Activated CD8-positive, alpha-beta memory T cell treated with anti-CD3 and anti-CD28 coated beads, Interleukin-2, amount 10 ng/mL, durations not matched to agents 7 days and 5 days (primary cell): ENCODE measurements at regions of chr15 and their contacts with region 1.

Region 1: DNA sequence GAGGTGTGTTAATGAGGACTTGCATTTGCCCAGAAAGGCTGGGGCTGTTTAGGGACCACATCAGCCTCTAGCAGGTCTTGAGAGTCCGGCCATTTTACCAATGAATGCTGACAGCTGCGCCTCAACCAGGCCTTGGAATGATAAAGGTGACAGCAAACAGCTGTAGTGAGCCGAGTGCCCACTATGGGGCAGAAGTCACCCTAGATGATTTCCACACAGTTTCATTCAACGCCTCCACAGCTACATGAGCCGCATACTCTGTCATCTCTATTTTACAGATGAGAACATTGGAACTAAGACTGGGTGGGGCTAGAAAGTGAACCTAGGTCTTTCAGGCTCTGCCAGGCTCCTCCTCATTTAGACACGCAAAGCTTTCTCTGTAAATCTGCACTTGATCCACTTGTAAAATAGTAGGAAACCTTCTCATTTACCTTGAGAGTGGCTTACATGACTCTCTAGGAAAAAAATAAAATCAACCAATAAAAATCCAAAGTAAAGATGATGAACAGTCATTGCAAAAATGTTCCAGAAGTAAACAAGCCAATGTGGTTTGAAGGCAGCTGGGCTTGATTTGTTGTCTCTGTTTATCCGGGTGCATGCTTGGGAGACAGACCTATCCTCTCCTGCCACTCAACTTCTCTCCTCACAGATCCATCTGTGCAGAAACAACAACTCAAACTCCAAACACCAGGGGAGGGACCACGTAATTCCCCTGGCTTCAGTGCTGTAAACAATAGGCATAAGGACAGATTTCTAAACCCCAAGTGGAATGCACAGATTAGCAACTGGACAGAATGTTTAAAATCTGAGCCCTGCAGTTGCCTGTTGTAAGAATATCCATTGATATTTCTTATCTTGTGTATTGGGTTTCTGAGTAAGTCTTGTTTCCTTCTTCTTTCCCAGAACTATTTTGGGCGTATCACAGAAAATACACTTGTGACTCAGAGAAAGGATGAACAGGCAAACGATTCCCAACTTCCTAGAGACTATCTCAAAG is 31.5 kb upstream of the LDHAL6B start:
- DNase-seq: peak; percentile 63
- ATAC-seq: peak; percentile 91
- H3K4me3 Mint-ChIP-seq: no peak overlapping the region
- H3K27ac Mint-ChIP-seq: no peak overlapping the region
- H3K4me1 Mint-ChIP-seq: peaks cover 17% of the 10 kb centered on the region
- H3K27me3 Mint-ChIP-seq: peaks cover 4% of the 10 kb centered on the region

Region 2: DNA sequence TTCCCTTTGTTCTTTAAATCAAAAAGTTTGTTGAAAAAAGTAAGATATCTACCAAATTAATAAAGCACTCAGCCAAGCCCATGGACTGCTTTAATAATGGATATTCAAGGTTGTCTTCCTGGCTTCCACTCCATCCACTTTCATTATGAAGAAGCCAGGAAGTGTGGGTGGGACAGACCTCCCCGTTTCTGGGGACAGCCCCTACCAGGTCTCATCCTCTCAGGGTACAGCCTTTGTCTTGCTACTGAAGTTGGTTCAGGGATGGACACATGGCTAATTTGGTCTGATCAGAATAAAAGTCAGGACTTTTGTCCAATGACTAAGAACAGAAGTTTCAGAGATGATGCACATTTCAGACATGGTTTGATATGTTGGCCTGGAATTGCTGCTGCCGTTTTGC is 37.6 kb before region 1 on chr15:
- CTCF ChIA-PET with region 1: no interaction called
- DNase-seq: no peak
- ATAC-seq: peak; percentile 45
- H3K4me3 Mint-ChIP-seq: no peak overlapping the region
- H3K27ac Mint-ChIP-seq: peak overlapping the region; percentile 50
- H3K4me1 Mint-ChIP-seq: peaks cover 21% of the 10 kb centered on the region
- H3K27me3 Mint-ChIP-seq: no peaks in the 10 kb centered on the region

Region 3: GRCh38 chr15:59191855-59192237 is 16.7 kb after region 1 on chr15:
- CTCF ChIA-PET with region 1: no interaction called
- DNase-seq: no peak
- ATAC-seq: no peak
- H3K4me3 Mint-ChIP-seq: no peak overlapping the region
- H3K27ac Mint-ChIP-seq: no peak overlapping the region
- H3K4me1 Mint-ChIP-seq: peaks cover 10% of the 10 kb centered on the region
- H3K27me3 Mint-ChIP-seq: peaks cover 5% of the 10 kb centered on the region

Region 4: DNA sequence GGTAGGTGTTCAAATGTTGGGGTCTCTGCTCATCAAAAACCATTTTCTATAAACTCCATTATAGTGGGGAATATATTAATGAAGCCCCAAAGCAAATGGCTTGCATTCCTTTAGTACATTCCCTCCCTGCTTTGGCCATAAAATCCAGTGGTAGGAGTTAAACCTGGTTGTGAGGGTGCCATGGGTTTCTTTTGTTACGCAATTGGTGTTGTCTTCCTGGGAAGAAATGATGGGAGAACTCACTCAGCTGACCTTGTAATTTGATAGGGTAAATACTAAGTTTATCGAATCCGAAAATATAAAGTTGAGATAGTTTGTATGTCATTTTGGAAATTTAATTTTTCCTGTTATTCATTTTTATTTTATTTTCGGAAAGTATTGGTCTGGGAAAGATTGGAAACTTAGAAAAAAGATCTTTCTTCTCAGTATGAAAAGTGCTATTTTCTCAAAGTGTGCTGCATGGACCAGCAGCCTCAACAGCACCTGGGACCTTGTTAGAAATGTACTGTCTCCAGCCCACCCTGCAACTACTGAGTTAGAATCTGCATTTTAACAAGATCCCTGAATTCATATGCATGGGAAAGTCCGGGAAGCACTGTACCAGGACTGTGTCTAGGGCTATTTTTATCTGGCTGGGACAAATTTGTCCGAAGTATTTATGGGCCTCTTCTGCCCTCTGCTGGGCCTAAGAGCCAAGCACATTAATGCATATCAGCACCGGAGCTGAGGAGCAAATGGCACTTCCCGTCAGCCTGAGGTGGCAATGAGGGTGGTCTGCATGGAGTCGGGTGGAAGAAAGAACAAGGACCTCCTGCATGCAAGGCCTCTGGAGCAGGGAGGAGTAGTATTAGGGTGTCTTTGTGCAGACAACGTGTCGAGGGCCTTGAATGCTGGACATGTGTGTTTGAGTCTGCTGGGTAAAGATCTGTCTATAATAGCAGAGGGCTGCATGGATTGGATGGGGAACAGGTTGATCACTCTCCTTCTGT is 317.6 kb after region 1 on chr15:
- CTCF ChIA-PET with region 1: interaction called, 10 read pairs
- DNase-seq: peak; percentile 66
- ATAC-seq: peak; percentile 87
- H3K4me3 Mint-ChIP-seq: no peak overlapping the region
- H3K27ac Mint-ChIP-seq: no peak overlapping the region
- H3K4me1 Mint-ChIP-seq: peaks cover 2% of the 10 kb centered on the region
- H3K27me3 Mint-ChIP-seq: peaks cover 17% of the 10 kb centered on the region